BJ (cell line): ENCODE measurements at regions of chr14 and their contacts with region 1.

Region 1: GRCh38 chr14:23555882-23556699 is at the start of gene THTPA:
- DNase-seq: no peak
- H3K4me3 ChIP-seq: peak within 1 kb of the TSS; percentile 61
- H3K27me3 ChIP-seq: no peaks in the 10 kb centered on the region
- CTCF ChIP-seq: no peak
- polyA plus RNA-seq, gene THTPA: 8.1 and 14.2 TPM in 2 replicates

Region 2: GRCh38 chr14:23327947-23328744 is 227.9 kb before region 1 on chr14:
- CTCF ChIA-PET with region 1: interaction called, 13 read pairs
- POLR2A ChIA-PET with region 1: no interaction called
- DNase-seq: no peak
- H3K4me3 ChIP-seq: no peak overlapping the region
- H3K27me3 ChIP-seq: no peaks in the 10 kb centered on the region
- CTCF ChIP-seq: peak; percentile 79

Region 3: GRCh38 chr14:23469127-23469905 is 86.8 kb before region 1 on chr14 and contains the start of gene NGDN:
- CTCF ChIA-PET with region 1: interaction called, 479 read pairs
- POLR2A ChIA-PET with region 1: no interaction called
- DNase-seq: peak; percentile 100
- H3K4me3 ChIP-seq: peak within 1 kb of the TSS; percentile 89
- H3K27me3 ChIP-seq: peaks cover 2% of the 10 kb centered on the region; the same call in 1 of the 2 replicates
- CTCF ChIP-seq: peak; percentile 79
- polyA plus RNA-seq, gene NGDN: 34.5 and 51.3 TPM in 2 replicates

Region 4: DNA sequence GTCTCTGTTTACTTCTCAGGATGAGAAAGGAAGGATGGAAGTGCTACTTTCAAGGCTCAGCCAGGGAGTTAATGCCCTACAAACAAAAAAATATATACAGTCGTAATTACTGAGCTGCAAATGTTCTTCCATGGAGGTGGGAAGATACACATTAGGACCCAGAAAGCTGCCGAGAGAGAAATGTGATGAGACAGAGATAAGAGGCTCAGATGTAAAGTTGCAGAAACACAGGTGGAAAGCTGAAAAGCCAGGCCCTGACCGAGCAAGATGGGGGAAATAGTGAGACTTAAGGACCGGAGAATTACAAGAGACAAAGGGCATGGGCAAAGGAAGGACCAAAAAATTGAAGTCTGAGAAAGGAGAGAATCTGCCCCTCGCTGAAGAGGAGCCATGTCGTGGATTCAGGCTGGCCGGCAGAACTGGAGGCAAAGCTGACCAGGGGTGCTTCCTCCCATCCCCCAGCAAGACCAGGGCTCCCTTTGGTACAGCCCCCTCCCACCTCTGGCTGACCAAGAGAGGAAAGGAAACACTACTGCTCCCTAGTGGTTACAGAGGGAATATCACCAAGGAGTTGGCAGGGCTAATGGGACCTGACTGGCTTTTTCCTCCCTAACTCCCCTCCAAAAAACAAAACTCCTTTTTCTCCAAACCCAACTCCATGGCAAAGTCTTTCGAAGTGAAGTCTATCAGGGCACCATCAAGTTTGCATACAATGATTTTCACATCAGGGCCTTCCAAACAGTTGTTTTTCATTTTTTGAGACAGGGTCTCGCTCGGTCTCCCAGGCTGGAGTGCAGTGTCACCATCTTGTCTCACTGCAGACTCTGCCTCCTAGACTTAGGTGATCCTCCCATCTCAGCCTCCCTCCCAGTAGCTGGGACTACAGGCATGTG is 16.6 kb before region 1 on chr14:
- CTCF ChIA-PET with region 1: interaction called, 23 read pairs
- POLR2A ChIA-PET with region 1: no interaction called
- DNase-seq: no peak
- H3K4me3 ChIP-seq: no peak overlapping the region
- H3K27me3 ChIP-seq: no peaks in the 10 kb centered on the region
- CTCF ChIP-seq: peak; percentile 63

Region 5: GRCh38 chr14:23544511-23545447 is 11.3 kb before region 1 on chr14:
- CTCF ChIA-PET with region 1: interaction called, 23 read pairs
- POLR2A ChIA-PET with region 1: no interaction called
- DNase-seq: no peak
- H3K4me3 ChIP-seq: no peak overlapping the region
- H3K27me3 ChIP-seq: no peaks in the 10 kb centered on the region
- CTCF ChIP-seq: no peak